ENCODE measurements at regions of chr11 and their contacts with region 1.

Region 1: GRCh38 chr11:89405629-89406028 is 85.5 kb downstream of the NOX4 start:
- DNase-seq: no peak
- H3K4me3 Mint-ChIP-seq: no peak overlapping the region
- H3K27ac Mint-ChIP-seq: no peak overlapping the region
- H3K4me1 Mint-ChIP-seq: no peaks in the 10 kb centered on the region
- H3K27me3 Mint-ChIP-seq: no peaks in the 10 kb centered on the region

Region 2: GRCh38 chr11:89205378-89205777 is 200.3 kb before region 1 on chr11:
- CTCF ChIA-PET with region 1: no interaction called
- intact Hi-C with region 1: loop called (anchors 5 kb)
- DNase-seq: no peak
- H3K4me3 Mint-ChIP-seq: no peak overlapping the region
- H3K27ac Mint-ChIP-seq: no peak overlapping the region
- H3K4me1 Mint-ChIP-seq: no peaks in the 10 kb centered on the region
- H3K27me3 Mint-ChIP-seq: no peaks in the 10 kb centered on the region

Region 3: DNA sequence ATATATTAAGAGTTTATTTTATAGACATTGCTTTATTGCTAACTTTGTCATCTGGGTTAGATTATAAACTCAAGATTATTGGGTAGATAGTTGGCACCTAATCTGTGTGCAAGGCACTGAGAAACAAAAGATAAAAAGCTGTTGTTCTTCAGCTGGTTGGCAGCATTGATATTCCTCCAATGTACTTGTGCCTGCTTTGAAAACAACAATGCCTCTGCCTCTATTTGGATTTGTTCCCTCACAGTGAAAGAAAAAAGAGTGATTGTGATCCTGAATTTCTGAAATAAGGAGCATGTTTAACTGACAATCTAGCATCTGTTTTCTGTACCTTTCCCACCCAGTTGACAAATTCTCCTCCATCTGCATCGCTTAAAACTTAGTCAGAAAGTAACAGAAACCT is 129.7 kb before region 1 on chr11:
- CTCF ChIA-PET with region 1: no interaction called
- intact Hi-C with region 1: no loop called
- DNase-seq: no peak
- H3K4me3 Mint-ChIP-seq: no peak overlapping the region
- H3K27ac Mint-ChIP-seq: no peak overlapping the region
- H3K4me1 Mint-ChIP-seq: peaks cover 14% of the 10 kb centered on the region
- H3K27me3 Mint-ChIP-seq: no peaks in the 10 kb centered on the region

Region 4: GRCh38 chr11:89327885-89328284 is 77.7 kb before region 1 on chr11:
- CTCF ChIA-PET with region 1: no interaction called
- intact Hi-C with region 1: loop called (anchors 5 kb)
- DNase-seq: no peak
- H3K4me3 Mint-ChIP-seq: no peak overlapping the region
- H3K27ac Mint-ChIP-seq: no peak overlapping the region
- H3K4me1 Mint-ChIP-seq: no peaks in the 10 kb centered on the region
- H3K27me3 Mint-ChIP-seq: no peaks in the 10 kb centered on the region